ENCODE measurements at regions of chr11 and their contacts with region 1.

Region 1: GRCh38 chr11:130403271-130403804 is 25.1 kb downstream of the ADAMTS8 start:
- DNase-seq: peak; percentile 59 to 83 (median 74)
- ATAC-seq: peak; percentile 62 to 81 (median 76)
- H3K4me3 ChIP-seq: no peak overlapping the region
- H3K27ac ChIP-seq: peak overlapping the region in 11 of 12 donors; percentile 4 to 80 (median 56)
- H3K4me1 ChIP-seq: peaks cover 0 to 48% (median 21%) of the 10 kb centered on the region in 12 donors
- H3K27me3 ChIP-seq: no peaks in the 10 kb centered on the region
- CTCF ChIP-seq: no peak
- POLR2A ChIP-seq: no peak

Region 2: DNA sequence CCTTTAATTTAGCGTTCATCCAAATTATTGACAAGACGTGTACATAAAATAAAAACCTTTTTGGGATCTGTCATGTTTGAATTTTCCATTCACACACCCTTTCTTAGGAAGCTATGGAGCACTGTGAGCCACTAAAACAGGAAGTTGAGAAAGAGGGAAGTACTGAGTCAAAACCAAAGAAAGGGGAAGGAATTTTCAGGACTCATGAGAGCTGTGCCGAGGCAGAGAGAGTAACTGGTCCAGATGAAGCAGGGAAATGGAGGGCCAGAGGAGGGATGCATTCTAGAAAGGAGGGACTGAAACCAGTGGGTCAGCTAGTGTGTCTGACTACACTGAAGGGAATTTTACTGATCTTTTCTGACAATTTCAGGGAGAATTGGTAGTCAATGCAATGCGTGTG is 308.7 kb before region 1 on chr11:
- intact Hi-C with region 1: no loop called
- DNase-seq: no peak
- ATAC-seq: peak; percentile 55 to 71 (median 66)
- H3K4me3 ChIP-seq: no peak overlapping the region
- H3K27ac ChIP-seq: peak overlapping the region in 1 of 12 donors; percentile 37
- H3K4me1 ChIP-seq: peaks cover 0 to 52% (median 11%) of the 10 kb centered on the region in 12 donors
- H3K27me3 ChIP-seq: no peaks in the 10 kb centered on the region
- CTCF ChIP-seq: no peak
- POLR2A ChIP-seq: no peak

Region 3: GRCh38 chr11:130314750-130315285 is 88.5 kb before region 1 on chr11 and contains the start of gene ZBTB44:
- intact Hi-C with region 1: loop called in 1 of 10 experiments (anchors 5 kb)
- DNase-seq: peak; percentile 94 to 97 (median 95)
- ATAC-seq: peak; percentile 97 to 98 (median 97)
- H3K4me3 ChIP-seq: peak within 1 kb of the TSS; percentile 64 to 99 (median 94)
- H3K27ac ChIP-seq: peak within 1 kb of the TSS; percentile 66 to 96 (median 92)
- H3K4me1 ChIP-seq: peaks cover 0 to 42% (median 23%) of the 10 kb centered on the region in 12 donors
- H3K27me3 ChIP-seq: no peaks in the 10 kb centered on the region
- CTCF ChIP-seq: no peak
- POLR2A ChIP-seq: no peak
- total RNA-seq, gene ZBTB44: 31.9 to 56.3 (median 40.3) TPM

Measured in heart left ventricle (tissue), 16 donors.